Lower leg skin (tissue), 4 donors: ENCODE measurements at regions of chr9 and their contacts with region 1.

Region 1: GRCh38 chr9:74735761-74736160 is 152.0 kb downstream of the TRPM6 start:
- DNase-seq: no peak
- H3K4me3 ChIP-seq: no peak overlapping the region
- CTCF ChIP-seq: no peak
- POLR2A ChIP-seq: no peak

Region 2: GRCh38 chr9:75921391-75922127 is 1185.8 kb after region 1 on chr9:
- intact Hi-C with region 1: loop called (anchors 5 kb)
- DNase-seq: no peak
- H3K4me3 ChIP-seq: no peak overlapping the region
- CTCF ChIP-seq: no peak
- POLR2A ChIP-seq: no peak